CD8-positive, alpha-beta memory T cell (primary cell): ENCODE measurements at regions of chr19 and their contacts with region 1.

Region 1: GRCh38 chr19:42244347-42245220 is 2.2 kb upstream of the GSK3A start:
- DNase-seq: peak; percentile 84 to 94 (median 86)
- H3K4me3 ChIP-seq: peak overlapping the region; percentile 81
- H3K4me3 Mint-ChIP-seq: peak overlapping the region; percentile 94 to 99 (median 96)
- H3K27ac ChIP-seq: peak overlapping the region; percentile 66
- H3K27ac Mint-ChIP-seq: peak overlapping the region; percentile 95 to 99 (median 98)
- H3K4me1 ChIP-seq: peaks cover 40% of the 10 kb centered on the region
- H3K4me1 Mint-ChIP-seq: peaks cover 42 to 58% (median 45%) of the 10 kb centered on the region in 3 donors
- H3K27me3 ChIP-seq: no peaks in the 10 kb centered on the region
- H3K27me3 Mint-ChIP-seq: peaks cover 0 to 2% of the 10 kb centered on the region in 2 donors

Region 2: DNA sequence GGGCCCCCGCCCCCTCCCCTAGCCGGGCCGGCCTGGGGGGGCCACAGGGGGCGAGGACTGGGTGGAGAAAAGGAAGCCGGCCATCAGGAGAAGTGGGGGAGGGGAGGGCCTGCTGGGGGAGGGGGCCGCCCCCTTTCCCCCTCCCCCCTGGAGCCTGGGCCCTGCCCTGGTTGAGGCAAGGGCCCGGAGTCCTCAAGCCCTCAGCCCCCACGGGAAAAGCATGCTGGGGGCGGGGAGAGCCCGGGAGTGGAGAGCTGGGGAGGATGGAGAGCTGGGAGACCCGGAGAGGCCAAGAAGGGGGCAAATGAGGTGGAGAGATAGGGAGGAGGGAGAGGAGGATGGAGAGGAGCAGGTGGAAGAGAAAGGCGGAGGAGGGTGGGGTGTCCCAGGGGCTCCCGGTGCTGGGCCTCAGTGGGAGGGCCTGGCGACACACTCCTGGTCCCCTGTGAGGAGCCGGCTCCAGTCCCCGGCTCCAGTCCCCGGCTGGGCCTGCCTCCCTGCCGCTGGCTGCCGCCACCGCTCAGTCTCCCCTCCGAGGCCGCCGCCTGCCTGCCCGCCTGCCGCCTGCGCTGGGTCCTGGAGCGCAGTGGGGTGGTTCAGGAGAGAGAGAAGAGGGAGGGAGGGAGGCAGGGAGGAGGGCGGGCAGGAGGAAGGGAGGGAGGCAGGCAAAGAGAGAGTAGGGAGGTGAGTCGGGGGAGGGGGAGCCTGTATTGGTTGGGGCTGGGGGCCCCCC is 174.8 kb before region 1 on chr19 and contains the start of gene GRIK5:
- CTCF ChIA-PET with region 1: no interaction called
- POLR2A ChIA-PET with region 1: no interaction called
- DNase-seq: no peak
- H3K4me3 ChIP-seq: no peak within 1 kb of the TSS
- H3K4me3 Mint-ChIP-seq: peak within 1 kb of the TSS in 1 of 7 donors; percentile 74
- H3K27ac ChIP-seq: no peak within 1 kb of the TSS
- H3K27ac Mint-ChIP-seq: peak within 1 kb of the TSS in 2 of 8 donors; percentile 75 to 78
- H3K4me1 ChIP-seq: peaks cover 3% of the 10 kb centered on the region
- H3K4me1 Mint-ChIP-seq: peaks cover 0 to 4% (median 2%) of the 10 kb centered on the region in 3 donors
- H3K27me3 ChIP-seq: peaks cover 16% of the 10 kb centered on the region
- H3K27me3 Mint-ChIP-seq: peaks cover 5 to 6% of the 10 kb centered on the region in 2 donors
- total RNA-seq, gene GRIK5: 0.31 to 0.39 TPM

Region 3: DNA sequence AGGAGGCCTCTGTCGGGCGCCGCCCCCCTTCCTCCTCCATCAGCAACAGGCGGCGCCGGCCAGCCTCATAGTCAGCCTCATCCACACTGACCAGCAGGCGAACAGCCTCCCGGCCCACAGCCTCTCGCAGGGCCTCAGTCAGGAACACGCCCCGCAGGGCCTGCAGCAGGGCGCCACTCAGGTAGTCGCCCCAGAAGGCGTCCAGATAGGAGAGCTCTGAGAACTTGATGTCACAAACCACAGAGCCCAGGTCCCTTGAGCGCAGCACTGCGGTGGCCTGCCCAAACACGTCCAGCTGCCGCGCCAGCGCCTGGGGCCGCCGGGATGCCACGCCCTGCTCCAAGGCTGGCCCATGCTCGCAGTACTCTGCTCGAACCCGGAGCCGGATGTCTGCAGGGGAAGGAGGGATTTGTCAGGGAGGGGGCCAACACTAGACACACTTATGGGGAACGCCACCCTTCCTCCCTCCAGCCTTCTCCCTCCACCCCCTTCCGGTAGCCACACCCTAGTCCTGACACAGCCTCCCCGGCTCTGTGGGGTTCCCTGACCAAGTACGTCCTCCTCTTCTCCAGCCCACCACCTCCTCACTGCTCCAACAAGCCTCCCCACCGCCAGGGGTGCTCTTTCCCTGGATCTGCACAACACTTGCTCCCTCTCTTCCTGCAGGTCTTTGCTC is 45.0 kb before region 1 on chr19:
- CTCF ChIA-PET with region 1: interaction called, 3 read pairs
- POLR2A ChIA-PET with region 1: interaction called, 11 read pairs
- DNase-seq: peak in 4 of 5 donors; percentile 54 to 73 (median 56)
- H3K4me3 ChIP-seq: peak overlapping the region; percentile 61
- H3K4me3 Mint-ChIP-seq: peak overlapping the region; percentile 64 to 92 (median 86)
- H3K27ac ChIP-seq: peak overlapping the region; percentile 88
- H3K27ac Mint-ChIP-seq: peak overlapping the region; percentile 85 to 98 (median 97)
- H3K4me1 ChIP-seq: peaks cover 93% of the 10 kb centered on the region
- H3K4me1 Mint-ChIP-seq: peaks cover 78 to 85% (median 82%) of the 10 kb centered on the region in 3 donors
- H3K27me3 ChIP-seq: no peaks in the 10 kb centered on the region
- H3K27me3 Mint-ChIP-seq: peaks cover 0 to 1% of the 10 kb centered on the region in 2 donors

Region 4: GRCh38 chr19:42207767-42208271 is 36.8 kb before region 1 on chr19:
- CTCF ChIA-PET with region 1: no interaction called
- POLR2A ChIA-PET with region 1: interaction called, 15 read pairs
- DNase-seq: peak in 1 of 5 donors; percentile 42
- H3K4me3 ChIP-seq: no peak overlapping the region
- H3K4me3 Mint-ChIP-seq: peak overlapping the region in 5 of 7 donors; percentile 46 to 84 (median 60)
- H3K27ac ChIP-seq: no peak overlapping the region
- H3K27ac Mint-ChIP-seq: peak overlapping the region; percentile 59 to 94 (median 90)
- H3K4me1 ChIP-seq: peaks cover 48% of the 10 kb centered on the region
- H3K4me1 Mint-ChIP-seq: peaks cover 54 to 75% (median 71%) of the 10 kb centered on the region in 3 donors
- H3K27me3 ChIP-seq: no peaks in the 10 kb centered on the region
- H3K27me3 Mint-ChIP-seq: no peaks in the 10 kb centered on the region

Region 5: DNA sequence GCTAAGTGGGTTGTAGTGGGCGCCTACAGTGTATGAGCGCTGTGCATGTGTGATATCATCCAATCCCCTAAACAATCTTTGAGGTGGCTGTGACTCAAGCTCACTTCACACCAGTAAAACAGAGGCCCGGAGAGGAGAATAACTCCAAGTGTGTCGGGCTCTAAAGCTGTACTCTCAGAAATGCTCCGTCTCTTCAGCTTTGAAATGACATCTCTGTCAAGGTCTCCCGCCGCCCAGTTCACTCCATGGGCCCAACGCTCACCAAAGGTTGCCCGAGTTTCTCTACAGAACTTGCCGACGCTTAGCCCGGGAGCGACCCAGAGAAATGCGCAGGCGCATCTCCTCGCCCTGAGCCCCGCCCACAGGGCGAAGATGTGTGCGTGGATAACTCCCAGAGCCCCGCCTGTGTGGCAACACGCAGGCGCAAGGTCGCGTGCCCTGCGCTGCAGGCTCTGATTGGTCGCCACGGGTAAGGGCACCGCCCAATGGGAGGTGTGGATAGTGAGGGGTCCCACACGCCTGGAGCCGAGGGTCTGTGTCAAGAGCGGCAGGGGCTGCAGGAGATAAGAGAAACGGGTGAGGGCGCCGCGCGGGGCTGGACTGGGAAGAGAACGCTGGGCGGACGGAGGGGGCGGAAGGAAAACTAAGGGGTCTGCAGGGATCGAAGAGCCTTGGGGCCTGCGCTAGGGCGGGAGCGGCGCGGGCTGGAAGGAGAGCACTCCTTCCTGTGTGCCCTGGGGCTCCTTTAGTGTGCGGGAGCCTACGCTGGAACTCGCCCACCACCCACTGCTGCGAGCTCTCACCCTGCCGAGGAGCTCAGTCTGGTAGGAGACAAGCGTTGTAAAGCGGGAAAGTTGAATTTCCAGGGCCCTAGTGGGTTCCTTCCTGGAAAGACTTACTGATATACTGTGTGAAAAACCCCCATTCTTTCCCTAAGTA is 24.5 kb before region 1 on chr19 and contains the start of gene ZNF526:
- CTCF ChIA-PET with region 1: interaction called, 11 read pairs
- POLR2A ChIA-PET with region 1: interaction called, 10 read pairs
- DNase-seq: peak; percentile 96 to 98 (median 96)
- H3K4me3 ChIP-seq: peak within 1 kb of the TSS; percentile 75
- H3K4me3 Mint-ChIP-seq: peak within 1 kb of the TSS; percentile 94 to 100 (median 97)
- H3K27ac ChIP-seq: peak within 1 kb of the TSS; percentile 99
- H3K27ac Mint-ChIP-seq: peak within 1 kb of the TSS; percentile 95 to 99 (median 96)
- H3K4me1 ChIP-seq: peaks cover 46% of the 10 kb centered on the region
- H3K4me1 Mint-ChIP-seq: peaks cover 45 to 62% (median 50%) of the 10 kb centered on the region in 3 donors
- H3K27me3 ChIP-seq: no peaks in the 10 kb centered on the region
- H3K27me3 Mint-ChIP-seq: peaks cover 0 to 3% of the 10 kb centered on the region in 2 donors
- total RNA-seq, gene ZNF526: 18.4 to 20.5 TPM

Region 6: DNA sequence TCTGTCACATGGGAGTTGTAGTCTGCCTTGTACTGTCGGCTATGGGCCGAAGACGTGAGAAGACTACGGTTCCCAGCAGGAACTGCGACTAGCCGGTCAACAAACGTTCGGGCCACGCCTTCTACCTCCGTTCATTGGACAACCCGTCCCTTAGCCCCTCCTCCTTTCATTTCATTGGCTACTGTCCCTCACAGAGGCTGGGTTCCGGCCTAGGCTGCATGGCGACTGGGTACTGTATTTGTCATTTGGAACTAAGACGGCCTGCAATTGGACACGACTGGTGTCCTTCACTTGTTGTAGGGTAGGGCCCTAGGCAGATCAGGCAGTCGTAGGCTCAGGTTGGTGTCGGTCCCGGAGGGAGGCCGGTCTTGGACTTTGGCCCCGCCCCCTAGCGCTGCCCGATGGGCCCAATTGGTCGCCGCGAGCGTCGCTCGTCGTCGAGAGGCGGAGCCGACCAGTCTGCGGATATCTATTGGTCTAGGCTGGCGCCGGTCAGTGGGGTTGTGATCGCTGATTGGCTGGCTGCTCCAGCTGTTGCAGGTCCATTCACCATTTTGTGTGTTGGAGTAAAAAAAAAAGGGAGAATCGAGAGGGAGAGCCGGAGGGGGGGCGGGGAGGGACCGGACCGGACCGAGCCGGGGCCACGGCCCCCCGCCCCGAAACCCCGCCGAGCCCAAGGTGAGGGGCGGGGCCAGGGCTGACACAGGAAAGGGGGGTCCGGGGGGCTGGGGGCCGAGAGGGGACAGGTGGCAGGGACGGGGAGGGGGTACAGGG is 24.3 kb after region 1 on chr19 and contains the start of gene CIC:
- CTCF ChIA-PET with region 1: interaction called, 3 read pairs
- POLR2A ChIA-PET with region 1: interaction called, 13 read pairs
- DNase-seq: peak; percentile 99 to 100 (median 99)
- H3K4me3 ChIP-seq: peak within 1 kb of the TSS; percentile 72
- H3K4me3 Mint-ChIP-seq: peak within 1 kb of the TSS in 3 of 7 donors; percentile 83 to 91 (median 89)
- H3K27ac ChIP-seq: peak within 1 kb of the TSS; percentile 98
- H3K27ac Mint-ChIP-seq: peak within 1 kb of the TSS in 6 of 8 donors; percentile 95 to 100 (median 98)
- H3K4me1 ChIP-seq: peaks cover 29% of the 10 kb centered on the region
- H3K4me1 Mint-ChIP-seq: peaks cover 21 to 32% (median 27%) of the 10 kb centered on the region in 3 donors
- H3K27me3 ChIP-seq: no peaks in the 10 kb centered on the region
- H3K27me3 Mint-ChIP-seq: peaks cover 0 to 4% of the 10 kb centered on the region in 2 donors
- total RNA-seq, gene CIC: 53.9 to 60.4 TPM